Activated CD8-positive, alpha-beta T cell treated with anti-CD3 and anti-CD28 coated beads for 36 hours (primary cell): ENCODE measurements at regions of chr1 and their contacts with region 1.

Region 1: GRCh38 chr1:33080885-33081553 is at the start of gene AZIN2:
- DNase-seq: peak; percentile 99
- ATAC-seq: peak; percentile 99
- H3K4me3 Mint-ChIP-seq: peak within 1 kb of the TSS; percentile 74
- H3K27ac Mint-ChIP-seq: no peak within 1 kb of the TSS
- H3K4me1 Mint-ChIP-seq: peaks cover 16% of the 10 kb centered on the region
- H3K27me3 Mint-ChIP-seq: no peaks in the 10 kb centered on the region
- CTCF ChIP-seq: no peak
- total RNA-seq, gene AZIN2: 2.5 TPM

Region 2: DNA sequence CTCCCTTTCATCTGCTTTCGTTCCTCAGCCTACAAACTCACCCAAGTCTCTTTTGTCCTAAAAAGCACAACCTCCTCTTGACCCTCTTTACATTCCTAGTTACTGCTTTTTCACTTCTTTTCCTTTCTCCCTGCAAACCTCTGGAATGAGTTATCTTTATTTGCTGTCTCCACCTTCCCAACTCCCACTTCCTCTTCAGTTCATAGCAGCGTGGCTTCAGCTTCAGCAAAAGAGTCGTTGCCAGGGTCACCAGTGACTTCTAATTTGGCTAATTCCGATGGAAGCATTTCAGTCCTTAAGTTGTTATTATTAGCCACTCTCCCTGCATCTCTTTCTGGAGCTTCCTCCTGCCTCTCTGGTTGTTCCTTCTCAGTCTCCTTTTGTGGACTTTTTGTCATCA is 173.6 kb before region 1 on chr1:
- CTCF ChIA-PET with region 1: no interaction called
- POLR2A ChIA-PET with region 1: no interaction called
- intact Hi-C with region 1: no loop called
- DNase-seq: no peak
- ATAC-seq: no peak
- H3K4me3 Mint-ChIP-seq: no peak overlapping the region
- H3K27ac Mint-ChIP-seq: no peak overlapping the region
- H3K4me1 Mint-ChIP-seq: no peaks in the 10 kb centered on the region
- H3K27me3 Mint-ChIP-seq: peaks cover 9% of the 10 kb centered on the region
- CTCF ChIP-seq: no peak

Region 3: DNA sequence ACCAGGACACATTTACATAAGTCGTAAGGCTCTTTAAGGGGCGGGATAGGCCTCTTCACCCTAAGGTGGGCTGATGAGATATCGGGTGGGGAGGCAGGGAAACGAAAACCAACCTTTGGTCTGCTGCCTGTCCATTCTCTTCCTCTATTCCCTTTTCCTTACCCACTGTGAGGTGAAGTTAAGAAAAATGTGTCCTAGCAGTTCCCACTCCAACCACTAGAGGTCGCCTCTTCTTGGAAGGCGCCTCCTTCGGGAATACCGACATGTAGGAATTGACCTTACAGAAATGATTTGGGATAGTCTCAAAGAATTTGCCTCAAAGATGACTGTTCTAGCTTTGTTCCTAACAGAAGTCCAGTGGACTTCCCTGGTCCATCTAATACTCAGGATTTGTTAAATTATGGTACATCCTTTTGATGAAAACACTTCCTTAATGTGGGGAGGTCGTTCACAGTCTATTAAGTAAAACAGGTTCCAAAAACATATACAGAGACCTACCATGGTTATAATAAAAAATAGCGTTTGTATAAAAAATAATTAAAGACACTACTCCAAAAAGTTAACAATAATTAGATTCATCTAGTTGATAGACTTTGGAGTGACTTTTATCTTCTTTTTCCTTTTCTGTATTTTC is 14.1 kb after region 1 on chr1:
- CTCF ChIA-PET with region 1: interaction called, 59 read pairs
- POLR2A ChIA-PET with region 1: interaction called, 4 read pairs
- intact Hi-C with region 1: no loop called
- DNase-seq: no peak
- ATAC-seq: no peak
- H3K4me3 Mint-ChIP-seq: no peak overlapping the region
- H3K27ac Mint-ChIP-seq: no peak overlapping the region
- H3K4me1 Mint-ChIP-seq: peaks cover 36% of the 10 kb centered on the region
- H3K27me3 Mint-ChIP-seq: no peaks in the 10 kb centered on the region
- CTCF ChIP-seq: peak; percentile 100